ENCODE measurements at regions of chr3 and their contacts with region 1.

Region 1: DNA sequence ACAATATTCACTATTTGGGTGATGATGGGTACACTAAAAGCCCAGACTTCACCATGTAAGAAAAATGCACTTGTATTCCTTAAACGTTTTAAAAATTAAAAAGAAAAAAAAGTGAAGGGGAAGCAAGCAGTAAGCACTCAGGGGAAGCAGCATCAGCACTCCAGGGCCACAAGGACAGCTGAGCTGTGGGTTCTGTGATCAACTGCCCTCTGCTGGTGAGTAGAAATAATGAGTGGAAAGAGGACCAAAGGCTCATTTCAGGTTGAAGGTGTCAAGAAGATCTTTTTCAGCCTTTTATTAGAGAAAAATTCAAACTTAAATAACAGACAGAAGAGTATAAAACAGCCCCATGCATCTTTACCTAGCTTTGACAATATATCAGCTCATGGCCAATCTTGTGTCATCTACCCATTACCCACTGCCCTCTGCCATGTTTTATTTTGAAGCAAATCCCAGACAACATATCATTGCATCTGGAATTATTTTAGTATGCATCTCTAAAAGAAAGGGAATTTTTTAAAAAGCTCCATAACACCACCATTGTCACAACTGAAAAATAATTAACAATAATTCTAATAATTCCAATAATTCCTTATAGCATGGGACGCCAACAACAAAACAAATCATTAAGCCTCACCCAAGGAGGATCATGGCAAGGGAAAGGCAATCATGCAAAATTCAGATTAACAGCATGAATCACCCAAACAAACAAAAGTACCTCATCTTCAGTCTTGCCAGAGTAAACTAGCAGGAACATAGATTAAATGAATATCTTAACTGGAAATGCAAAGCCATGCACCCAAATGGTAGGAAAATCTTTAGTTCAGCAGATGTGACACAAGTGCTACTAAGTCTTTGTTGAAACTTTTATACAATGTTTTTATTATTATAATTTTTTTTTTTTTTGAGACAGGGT is 42.5 kb downstream of the TAMM41 start:
- DNase-seq: peak; percentile 53
- ATAC-seq: peak; percentile 77
- H3K4me3 Mint-ChIP-seq: no peak overlapping the region
- H3K27ac Mint-ChIP-seq: no peak overlapping the region
- H3K4me1 Mint-ChIP-seq: no peaks in the 10 kb centered on the region
- H3K27me3 Mint-ChIP-seq: no peaks in the 10 kb centered on the region
- CTCF ChIP-seq: peak; percentile 70

Region 2: DNA sequence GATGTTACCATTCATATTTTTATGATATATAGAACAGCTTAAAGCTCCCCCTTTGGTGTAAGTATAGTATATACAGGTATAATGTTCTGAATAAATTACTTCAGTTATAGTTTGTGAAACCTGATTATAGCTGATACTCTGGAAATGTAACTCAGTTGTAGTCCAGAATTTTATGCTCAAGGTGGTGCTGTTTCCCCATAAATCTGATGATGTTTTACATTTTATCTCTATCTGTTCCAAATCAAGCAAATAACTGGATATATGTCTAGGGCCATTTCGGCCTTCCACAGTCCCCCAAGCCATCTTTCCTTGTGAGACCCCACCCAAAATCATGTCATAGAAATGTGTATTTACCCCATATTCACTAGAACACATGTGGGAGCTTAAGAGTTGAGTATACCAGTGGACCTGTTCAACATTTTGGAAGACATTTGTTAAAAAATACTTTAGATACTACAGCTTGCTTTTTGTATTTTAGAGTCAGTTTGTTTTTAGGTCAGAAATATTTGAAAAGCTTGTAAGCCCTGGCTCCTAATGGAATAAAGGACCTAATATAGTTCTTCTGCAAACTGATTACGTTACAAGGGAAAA is 424.9 kb before region 1 on chr3:
- CTCF ChIA-PET with region 1: interaction called, 12 read pairs
- POLR2A ChIA-PET with region 1: no interaction called
- intact Hi-C with region 1: no loop called
- DNase-seq: no peak
- ATAC-seq: peak; percentile 34
- H3K4me3 Mint-ChIP-seq: no peak overlapping the region
- H3K27ac Mint-ChIP-seq: no peak overlapping the region
- H3K4me1 Mint-ChIP-seq: no peaks in the 10 kb centered on the region
- H3K27me3 Mint-ChIP-seq: no peaks in the 10 kb centered on the region
- CTCF ChIP-seq: peak; percentile 23

Region 3: GRCh38 chr3:11651900-11652299 is 152.3 kb before region 1 on chr3:
- CTCF ChIA-PET with region 1: interaction called, 6 read pairs
- POLR2A ChIA-PET with region 1: no interaction called
- intact Hi-C with region 1: loop called (anchors 10 kb)
- DNase-seq: no peak
- ATAC-seq: no peak
- H3K4me3 Mint-ChIP-seq: no peak overlapping the region
- H3K27ac Mint-ChIP-seq: no peak overlapping the region
- H3K4me1 Mint-ChIP-seq: peaks cover 19% of the 10 kb centered on the region
- H3K27me3 Mint-ChIP-seq: no peaks in the 10 kb centered on the region
- CTCF ChIP-seq: peak; percentile 70

Region 4: GRCh38 chr3:11815111-11815510 is 10.9 kb after region 1 on chr3:
- CTCF ChIA-PET with region 1: interaction called, 13 read pairs
- POLR2A ChIA-PET with region 1: no interaction called
- intact Hi-C with region 1: no loop called
- DNase-seq: no peak
- ATAC-seq: no peak
- H3K4me3 Mint-ChIP-seq: no peak overlapping the region
- H3K27ac Mint-ChIP-seq: no peak overlapping the region
- H3K4me1 Mint-ChIP-seq: peaks cover 2% of the 10 kb centered on the region
- H3K27me3 Mint-ChIP-seq: no peaks in the 10 kb centered on the region
- CTCF ChIP-seq: no peak

Region 5: DNA sequence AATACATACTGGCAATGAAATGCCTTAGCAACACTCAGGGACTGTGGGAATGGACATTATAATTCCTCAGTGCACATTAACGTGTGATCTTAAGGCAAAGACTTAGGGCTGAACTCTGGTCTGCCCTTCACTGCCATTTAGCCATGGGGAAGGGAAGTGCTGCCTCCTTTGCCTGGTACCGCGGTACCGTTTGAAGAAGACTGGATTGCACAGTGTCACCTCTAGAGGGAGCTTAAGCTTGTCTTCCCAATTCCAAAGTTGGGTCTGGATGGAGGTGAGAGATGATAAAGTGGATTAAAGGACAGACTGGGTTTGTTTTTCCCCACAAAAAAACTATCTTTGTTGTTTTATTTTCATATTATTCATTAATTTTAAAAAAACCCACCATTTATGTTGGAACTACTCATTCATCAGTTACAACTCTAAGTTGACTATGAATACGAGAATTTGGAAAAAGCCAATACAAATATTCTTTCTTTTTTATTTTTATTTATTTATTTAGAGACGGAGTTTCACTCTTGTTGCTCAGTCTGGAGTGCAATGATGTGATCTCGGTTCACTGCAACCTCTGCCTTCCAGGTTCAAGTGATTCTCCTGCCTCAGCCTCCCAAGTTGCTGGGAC is 139.9 kb after region 1 on chr3:
- CTCF ChIA-PET with region 1: no interaction called
- POLR2A ChIA-PET with region 1: no interaction called
- intact Hi-C with region 1: no loop called
- DNase-seq: no peak
- ATAC-seq: no peak
- H3K4me3 Mint-ChIP-seq: no peak overlapping the region
- H3K27ac Mint-ChIP-seq: no peak overlapping the region
- H3K4me1 Mint-ChIP-seq: no peaks in the 10 kb centered on the region
- H3K27me3 Mint-ChIP-seq: peaks cover 7% of the 10 kb centered on the region
- CTCF ChIP-seq: peak; percentile 22

Measured in activated CD8-positive, alpha-beta T cell treated with anti-CD3 and anti-CD28 coated beads for 36 hours (primary cell).